ENCODE measurements at regions of chr2 and their contacts with region 1.

Region 1: DNA sequence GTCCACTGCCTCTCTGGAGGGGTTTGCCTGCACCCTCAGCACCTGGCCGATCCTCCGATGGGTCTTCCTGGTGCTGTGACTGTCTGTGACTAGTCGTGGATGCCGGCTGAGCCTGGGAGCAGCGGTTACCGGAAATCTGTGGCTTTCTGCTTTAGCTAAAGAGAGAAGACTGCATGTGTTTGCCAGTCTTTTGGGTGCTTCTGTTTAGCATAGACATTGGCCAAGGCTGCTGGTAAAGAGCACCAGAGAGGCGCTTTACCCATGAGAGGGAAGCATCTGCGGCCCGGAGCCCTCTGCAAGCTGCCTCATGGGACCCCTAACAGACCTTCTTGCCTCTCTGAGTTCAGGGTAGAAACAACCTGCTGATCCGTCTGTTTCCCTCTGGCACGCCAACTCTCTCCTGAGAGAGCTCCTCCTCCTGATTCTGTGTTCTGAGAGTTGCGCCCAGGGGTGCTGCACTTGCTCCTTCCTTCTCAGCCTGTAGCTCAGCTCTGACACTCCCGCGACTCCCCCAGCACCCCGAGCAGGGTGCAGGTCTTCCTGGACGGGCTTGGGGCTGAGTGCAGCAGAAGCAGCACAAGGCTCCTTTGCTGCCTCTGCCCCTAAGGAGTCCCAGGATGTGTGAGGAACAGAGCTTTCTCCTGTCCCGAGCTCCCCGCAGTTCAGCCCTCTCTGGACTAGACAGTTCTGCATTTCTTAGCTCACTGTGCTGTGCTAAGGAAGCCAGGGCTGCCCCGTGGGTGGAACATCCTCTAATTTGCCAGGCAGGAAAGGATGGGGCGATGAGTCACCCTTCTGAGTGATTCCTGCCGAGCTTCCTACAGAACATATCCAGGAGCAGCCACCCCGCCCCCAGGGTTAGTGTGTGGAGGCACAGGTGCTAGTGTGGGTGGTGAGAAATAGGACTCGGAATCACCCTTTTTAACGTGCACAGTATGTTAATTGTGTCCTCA is 203.2 kb downstream of the SH3RF3 start:
- ATAC-seq: peak; percentile 87 to 100 (median 99)
- H3K4me3 ChIP-seq: no peak overlapping the region
- H3K27ac ChIP-seq: no peak overlapping the region
- H3K4me1 ChIP-seq: peaks cover 10 to 13% of the 10 kb centered on the region in 2 donors

Region 2: GRCh38 chr2:108877506-108877905 is 454.7 kb before region 1 on chr2:
- in situ Hi-C with region 1: no loop called
- ATAC-seq: no peak
- H3K4me3 ChIP-seq: no peak overlapping the region
- H3K27ac ChIP-seq: no peak overlapping the region
- H3K4me1 ChIP-seq: no peaks in the 10 kb centered on the region

Region 3: GRCh38 chr2:109494351-109494750 is 162.2 kb after region 1 on chr2:
- in situ Hi-C with region 1: no loop called
- ATAC-seq: no peak
- H3K4me3 ChIP-seq: no peak overlapping the region
- H3K27ac ChIP-seq: no peak overlapping the region
- H3K4me1 ChIP-seq: peaks cover 24 to 25% of the 10 kb centered on the region in 2 donors

Region 4: DNA sequence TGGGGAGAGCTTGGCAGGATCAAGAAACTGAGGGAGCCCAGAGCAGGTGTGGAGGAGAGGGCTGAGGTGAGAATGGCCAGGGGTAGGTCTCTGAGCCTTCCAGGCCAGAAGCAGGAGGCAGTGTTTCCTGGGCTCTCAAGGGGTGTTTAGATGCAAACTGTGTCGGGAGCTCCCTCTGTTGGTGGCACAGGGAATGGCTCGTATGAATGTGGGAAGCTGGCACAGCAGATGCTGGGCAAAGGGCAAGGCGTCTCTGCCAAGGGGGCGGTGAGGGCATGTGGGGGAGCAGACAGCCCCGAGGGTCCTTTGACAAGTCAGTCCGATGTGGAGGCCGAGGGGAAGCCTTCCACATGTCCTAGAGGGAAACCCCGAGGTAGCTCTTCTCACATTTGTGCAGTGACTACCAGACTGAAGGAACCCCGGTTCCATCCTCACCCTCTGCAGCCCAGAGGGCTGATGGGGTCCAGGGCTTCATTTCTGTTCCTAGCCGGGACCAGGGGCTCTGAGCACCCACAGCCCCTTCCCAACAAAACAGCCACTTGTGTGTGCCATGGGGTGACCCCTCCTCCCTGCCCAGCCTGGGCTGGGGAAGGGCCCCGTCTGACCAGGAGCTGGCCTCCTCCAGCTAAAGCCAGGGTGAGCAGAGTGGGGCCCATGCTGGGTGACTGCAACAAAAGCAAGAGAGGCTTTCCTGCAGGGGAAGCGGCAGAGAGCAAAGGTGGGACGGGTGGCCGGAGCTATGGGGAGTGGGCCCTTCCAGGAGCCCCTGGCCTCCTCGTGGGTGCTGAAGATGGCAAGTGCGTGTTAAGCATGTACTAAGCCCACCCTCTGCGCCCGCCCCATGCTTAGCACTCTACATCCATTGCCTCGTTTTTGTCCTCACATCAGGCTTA is 178.2 kb after region 1 on chr2:
- in situ Hi-C with region 1: loop called in 1 of 9 experiments (anchors 25 kb)
- ATAC-seq: peak; percentile 42 to 91 (median 61)
- H3K4me3 ChIP-seq: no peak overlapping the region
- H3K27ac ChIP-seq: no peak overlapping the region
- H3K4me1 ChIP-seq: peaks cover 6 to 11% of the 10 kb centered on the region in 2 donors

Region 5: GRCh38 chr2:109644576-109645275 is 312.6 kb after region 1 on chr2:
- in situ Hi-C with region 1: no loop called
- ATAC-seq: peak; percentile 27 to 91 (median 82)
- H3K4me3 ChIP-seq: no peak overlapping the region
- H3K27ac ChIP-seq: peak overlapping the region in 1 of 2 donors; percentile 5
- H3K4me1 ChIP-seq: peaks cover 7 to 20% of the 10 kb centered on the region in 2 donors